HCT116 (cell line): ENCODE measurements at regions of chr1 and their contacts with region 1.

Region 1: DNA sequence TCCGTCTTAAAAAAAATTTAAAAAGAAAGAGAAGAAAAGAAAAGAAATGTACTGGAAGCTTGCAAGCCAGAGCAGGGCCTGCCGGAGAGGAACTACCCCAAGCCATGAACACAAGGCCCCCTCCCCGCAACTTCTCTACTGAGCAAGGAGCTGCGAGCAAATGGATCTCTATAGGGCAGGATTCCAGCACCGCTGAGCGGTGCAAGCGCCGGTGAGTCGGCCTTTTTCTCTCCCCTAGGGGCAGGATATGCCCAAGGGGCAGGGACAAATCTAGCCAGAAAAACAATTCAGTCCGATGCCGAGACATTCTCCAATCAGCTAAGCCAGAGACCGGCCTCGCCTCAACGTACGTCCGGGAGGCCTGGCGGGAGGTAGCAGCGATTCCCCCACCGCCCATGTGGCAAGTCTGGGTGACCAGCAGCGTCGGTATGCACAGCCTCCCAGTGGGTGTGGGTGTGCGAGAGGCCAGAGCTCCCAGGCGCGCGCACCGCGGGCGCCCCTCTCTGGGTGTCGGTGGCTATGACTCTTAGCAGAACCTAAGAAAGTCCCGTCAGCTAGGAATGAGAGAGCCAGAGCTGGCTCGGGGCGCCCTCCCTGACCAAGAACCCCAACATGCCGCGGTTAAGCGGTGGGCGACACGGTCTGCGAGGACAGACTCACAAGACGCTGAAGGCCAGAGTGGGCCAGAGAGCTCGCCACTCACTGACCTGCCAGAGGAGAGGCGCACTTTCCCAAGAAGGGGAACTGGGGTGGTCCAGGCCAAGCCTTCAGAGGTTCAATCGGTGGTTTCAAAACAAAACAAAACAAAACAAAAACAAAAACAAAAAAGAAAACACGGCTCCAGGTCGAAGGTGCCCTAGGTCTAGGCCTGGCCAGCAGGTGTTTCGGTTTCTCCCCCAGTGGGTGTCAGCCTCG is 1.9 kb downstream of the CSMD2 start:
- DNase-seq: peak; percentile 39
- ATAC-seq: peak; percentile 95
- H3K4me3 ChIP-seq: no peak overlapping the region
- H3K27ac ChIP-seq: no peak overlapping the region
- H3K4me1 ChIP-seq: peaks cover 0 to 4% of the 10 kb centered on the region in 2 experiments; a peak in 1 of 4 replicates
- H3K27me3 ChIP-seq: peaks cover 31% of the 10 kb centered on the region; the same call in 1 of the 2 replicates
- CTCF ChIP-seq: peak; percentile 56 to 64 (median 61)
- POLR2A ChIP-seq: no peak
- RAD21 ChIP-seq: peak; percentile 72

Region 2: DNA sequence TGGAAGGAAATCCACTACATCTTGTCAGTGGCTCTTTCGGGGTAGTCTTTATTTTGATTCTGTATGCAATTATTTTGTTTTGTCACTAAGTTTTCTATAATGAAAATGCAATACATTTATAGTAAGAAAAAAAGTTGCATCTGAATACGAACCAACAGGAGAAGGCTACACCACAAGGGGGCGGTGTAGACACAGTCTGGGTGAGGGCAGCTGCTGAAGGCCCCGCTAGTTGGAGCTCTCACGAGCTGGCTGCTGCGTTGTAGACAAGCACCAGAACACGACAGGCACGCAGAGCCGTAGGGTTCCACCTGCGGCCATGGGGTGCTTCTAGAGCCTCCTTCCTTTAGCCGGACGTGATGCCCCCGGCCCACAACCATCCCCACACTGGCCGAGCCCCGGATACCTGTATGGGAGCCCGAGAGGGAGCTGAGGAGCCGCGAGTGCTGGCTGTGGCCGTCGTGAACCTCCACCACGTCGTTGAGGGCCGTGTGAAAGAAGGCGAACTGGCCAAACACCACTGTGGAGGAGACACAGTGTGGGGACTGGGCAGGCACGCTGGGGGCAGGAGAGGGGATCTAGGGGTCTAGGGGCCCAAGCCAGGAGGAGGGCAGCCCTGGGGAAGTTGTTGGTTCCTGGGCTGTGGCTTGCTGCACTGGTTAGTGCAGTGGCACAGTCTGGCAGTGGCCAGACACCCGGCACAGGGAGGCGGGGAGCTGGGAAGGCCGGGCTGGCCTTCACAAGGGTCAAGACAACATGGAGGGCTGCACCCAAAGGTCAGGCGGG is 529.9 kb before region 1 on chr1:
- CTCF ChIA-PET with region 1: interaction called, 13 read pairs
- POLR2A ChIA-PET with region 1: interaction called, 3 read pairs
- RAD21 ChIA-PET with region 1: interaction called in 1 of 2 experiments, 3 read pairs
- intact Hi-C with region 1: no loop called
- DNase-seq: peak; percentile 82
- ATAC-seq: peak; percentile 85
- H3K4me3 ChIP-seq: no peak overlapping the region
- H3K27ac ChIP-seq: no peak overlapping the region
- H3K4me1 ChIP-seq: peaks cover 0 to 12% of the 10 kb centered on the region in 2 experiments; a peak in 2 of 4 replicates
- H3K27me3 ChIP-seq: 0 out of 2 replicates have a peak, but pooled peaks cover 5% of the 10 kb centered on the region
- CTCF ChIP-seq: peak; percentile 99 to 100 (median 100)
- POLR2A ChIP-seq: no peak
- RAD21 ChIP-seq: peak; percentile 67

Region 3: GRCh38 chr1:33641104-33641830 is 521.8 kb before region 1 on chr1:
- CTCF ChIA-PET with region 1: no interaction called
- POLR2A ChIA-PET with region 1: no interaction called
- RAD21 ChIA-PET with region 1: no interaction called
- intact Hi-C with region 1: loop called (anchors 2 kb)
- DNase-seq: peak; percentile 32
- ATAC-seq: peak; percentile 89
- H3K4me3 ChIP-seq: no peak overlapping the region
- H3K27ac ChIP-seq: no peak overlapping the region
- H3K4me1 ChIP-seq: no peaks in the 10 kb centered on the region
- H3K27me3 ChIP-seq: peaks cover 35% of the 10 kb centered on the region; the same call in 1 of the 2 replicates
- CTCF ChIP-seq: peak; percentile 40 to 68 (median 65); a peak in 5 of 6 replicates
- POLR2A ChIP-seq: no peak
- RAD21 ChIP-seq: peak; percentile 52

Region 4: DNA sequence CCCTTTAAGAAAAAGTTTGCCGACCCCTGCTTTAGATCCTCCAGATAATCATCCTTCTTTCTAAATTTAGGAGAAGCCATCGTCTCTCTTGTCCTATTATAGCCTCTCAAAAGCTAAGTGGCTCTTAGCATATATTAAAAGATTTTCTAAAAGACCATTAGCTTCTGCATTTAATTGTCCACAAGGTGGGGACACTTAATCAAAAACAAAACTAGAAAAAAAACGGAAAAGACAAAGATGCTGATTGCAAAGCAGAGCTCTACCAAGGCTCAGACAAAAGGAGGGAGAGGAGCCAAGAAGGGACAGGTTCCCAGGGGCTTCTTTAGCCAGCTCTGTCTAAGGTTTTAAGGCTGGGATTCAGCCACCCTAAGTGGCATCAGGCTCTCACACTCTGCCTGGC is 427.5 kb before region 1 on chr1:
- CTCF ChIA-PET with region 1: interaction called, 6 read pairs
- POLR2A ChIA-PET with region 1: no interaction called
- RAD21 ChIA-PET with region 1: no interaction called
- intact Hi-C with region 1: loop called (anchors 1 kb)
- DNase-seq: peak; percentile 1
- ATAC-seq: 0 out of 2 replicates have a peak, but pooled peaks have one; percentile 32
- H3K4me3 ChIP-seq: no peak overlapping the region
- H3K27ac ChIP-seq: no peak overlapping the region
- H3K4me1 ChIP-seq: no peaks in the 10 kb centered on the region
- H3K27me3 ChIP-seq: peaks cover 69% of the 10 kb centered on the region
- CTCF ChIP-seq: peak; percentile 14 to 53 (median 37); a peak in 3 of 6 replicates
- POLR2A ChIP-seq: no peak
- RAD21 ChIP-seq: peak; percentile 60

Region 5: DNA sequence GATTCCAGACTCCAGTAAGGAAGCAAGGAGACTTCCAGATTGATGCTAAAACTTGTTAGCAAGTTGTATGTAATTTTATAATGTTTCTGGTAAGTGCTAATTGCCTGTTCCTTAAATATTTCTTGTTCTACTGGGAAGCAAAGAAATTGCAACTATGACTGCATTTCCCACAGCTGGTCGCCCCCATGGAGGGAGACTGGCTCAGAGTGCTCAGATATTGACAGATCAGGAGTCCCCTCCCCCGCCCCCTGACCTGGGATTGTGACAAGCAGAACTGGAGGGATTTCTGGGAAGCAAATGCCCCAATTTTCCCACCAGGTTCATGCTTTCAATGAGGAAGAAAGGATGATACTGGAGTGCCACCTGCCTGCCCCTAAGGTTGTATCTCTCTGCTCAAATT is 381.5 kb before region 1 on chr1:
- CTCF ChIA-PET with region 1: no interaction called
- POLR2A ChIA-PET with region 1: no interaction called
- RAD21 ChIA-PET with region 1: no interaction called
- intact Hi-C with region 1: no loop called
- DNase-seq: no peak
- ATAC-seq: no peak
- H3K4me3 ChIP-seq: no peak overlapping the region
- H3K27ac ChIP-seq: no peak overlapping the region
- H3K4me1 ChIP-seq: no peaks in the 10 kb centered on the region
- H3K27me3 ChIP-seq: peaks cover 43% of the 10 kb centered on the region
- CTCF ChIP-seq: no peak
- POLR2A ChIP-seq: no peak
- RAD21 ChIP-seq: no peak

Region 6: GRCh38 chr1:33876970-33877650 is 286.0 kb before region 1 on chr1:
- CTCF ChIA-PET with region 1: no interaction called
- POLR2A ChIA-PET with region 1: no interaction called
- RAD21 ChIA-PET with region 1: no interaction called
- intact Hi-C with region 1: no loop called
- DNase-seq: no peak
- ATAC-seq: no peak
- H3K4me3 ChIP-seq: no peak overlapping the region
- H3K27ac ChIP-seq: no peak overlapping the region
- H3K4me1 ChIP-seq: no peaks in the 10 kb centered on the region
- H3K27me3 ChIP-seq: peaks cover 35% of the 10 kb centered on the region; the same call in 1 of the 2 replicates
- CTCF ChIP-seq: no peak
- POLR2A ChIP-seq: no peak
- RAD21 ChIP-seq: no peak

Region 7: GRCh38 chr1:34113887-34114286 is 49.2 kb before region 1 on chr1:
- CTCF ChIA-PET with region 1: interaction called, 12 read pairs
- POLR2A ChIA-PET with region 1: no interaction called
- RAD21 ChIA-PET with region 1: no interaction called
- intact Hi-C with region 1: loop called (anchors 1 kb)
- DNase-seq: peak; percentile 32
- ATAC-seq: peak; percentile 58; the same call in 1 of the 2 replicates
- H3K4me3 ChIP-seq: no peak overlapping the region
- H3K27ac ChIP-seq: no peak overlapping the region
- H3K4me1 ChIP-seq: no peaks in the 10 kb centered on the region
- H3K27me3 ChIP-seq: peaks cover 6% of the 10 kb centered on the region; the same call in 1 of the 2 replicates
- CTCF ChIP-seq: peak; percentile 43 to 56 (median 52); a peak in 5 of 6 replicates
- POLR2A ChIP-seq: no peak
- RAD21 ChIP-seq: peak; percentile 44; the same call in 1 of the 2 replicates